Common myeloid progenitor, CD34-positive (primary cell): ENCODE measurements at regions of chr10 and their contacts with region 1.

Region 1: DNA sequence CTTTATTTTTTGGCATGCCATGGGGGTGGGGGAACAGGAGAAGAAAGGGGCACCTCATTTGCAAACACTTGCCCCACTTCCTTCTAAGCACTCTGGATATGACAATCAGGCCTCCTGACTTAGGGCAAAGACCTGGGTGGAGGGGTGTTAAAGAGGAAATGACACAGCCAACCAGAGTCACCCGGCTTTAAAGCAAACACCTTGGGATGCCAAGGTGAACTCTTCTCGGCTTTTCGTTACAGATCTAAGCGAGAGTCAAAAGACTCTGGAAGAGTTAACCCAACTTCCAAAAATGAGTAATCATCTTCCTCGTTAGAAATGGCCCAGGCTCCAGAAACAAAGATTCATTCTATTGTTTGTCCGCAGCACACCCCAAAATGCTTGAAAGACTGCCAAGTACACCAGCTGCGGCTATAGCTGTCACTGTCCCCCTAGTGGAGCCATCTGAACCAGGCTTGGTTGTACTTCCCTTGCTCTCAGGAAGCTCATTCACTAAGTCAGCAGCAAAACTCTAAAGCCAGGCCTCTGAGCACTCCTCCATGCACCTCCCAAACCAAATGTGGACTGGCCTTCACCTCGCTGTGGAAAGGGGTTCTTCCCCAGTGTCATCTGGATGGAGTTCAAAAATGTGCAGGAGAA is 24.8 kb downstream of the FAM53B start:
- DNase-seq: peak; percentile 88 to 95 (median 95)
- H3K4me3 ChIP-seq: peak overlapping the region in 3 of 7 experiments; percentile 23 to 45 (median 41)
- H3K27ac ChIP-seq: peak overlapping the region in 1 of 2 experiments; percentile 49
- H3K4me1 ChIP-seq: peaks cover 42 to 86% (median 65%) of the 10 kb centered on the region in 4 experiments
- H3K27me3 ChIP-seq: no peaks in the 10 kb centered on the region

Region 2: GRCh38 chr10:124647421-124648130 is 71.8 kb before region 1 on chr10:
- CTCF ChIA-PET with region 1: interaction called, 15 read pairs
- POLR2A ChIA-PET with region 1: no interaction called
- DNase-seq: peak; percentile 86 to 92 (median 91)
- H3K4me3 ChIP-seq: peak overlapping the region in 5 of 7 experiments; percentile 16 to 60 (median 40)
- H3K27ac ChIP-seq: peak overlapping the region; percentile 46 to 72
- H3K4me1 ChIP-seq: peaks cover 16 to 87% (median 69%) of the 10 kb centered on the region in 4 experiments
- H3K27me3 ChIP-seq: no peaks in the 10 kb centered on the region

Region 3: GRCh38 chr10:124683814-124684213 is 35.5 kb before region 1 on chr10:
- CTCF ChIA-PET with region 1: interaction called, 11 read pairs
- POLR2A ChIA-PET with region 1: no interaction called
- DNase-seq: peak in 2 of 3 donors; percentile 34 to 35
- H3K4me3 ChIP-seq: peak overlapping the region in 1 of 7 experiments; percentile 40
- H3K27ac ChIP-seq: no peak overlapping the region
- H3K4me1 ChIP-seq: peaks cover 23 to 61% (median 30%) of the 10 kb centered on the region in 4 experiments
- H3K27me3 ChIP-seq: no peaks in the 10 kb centered on the region

Region 4: GRCh38 chr10:124688889-124689670 is 30.3 kb before region 1 on chr10:
- CTCF ChIA-PET with region 1: interaction called, 11 read pairs
- POLR2A ChIA-PET with region 1: no interaction called
- DNase-seq: peak in 1 of 3 donors; percentile 14
- H3K4me3 ChIP-seq: no peak overlapping the region
- H3K27ac ChIP-seq: no peak overlapping the region
- H3K4me1 ChIP-seq: peaks cover 16 to 70% (median 29%) of the 10 kb centered on the region in 4 experiments
- H3K27me3 ChIP-seq: no peaks in the 10 kb centered on the region

Region 5: DNA sequence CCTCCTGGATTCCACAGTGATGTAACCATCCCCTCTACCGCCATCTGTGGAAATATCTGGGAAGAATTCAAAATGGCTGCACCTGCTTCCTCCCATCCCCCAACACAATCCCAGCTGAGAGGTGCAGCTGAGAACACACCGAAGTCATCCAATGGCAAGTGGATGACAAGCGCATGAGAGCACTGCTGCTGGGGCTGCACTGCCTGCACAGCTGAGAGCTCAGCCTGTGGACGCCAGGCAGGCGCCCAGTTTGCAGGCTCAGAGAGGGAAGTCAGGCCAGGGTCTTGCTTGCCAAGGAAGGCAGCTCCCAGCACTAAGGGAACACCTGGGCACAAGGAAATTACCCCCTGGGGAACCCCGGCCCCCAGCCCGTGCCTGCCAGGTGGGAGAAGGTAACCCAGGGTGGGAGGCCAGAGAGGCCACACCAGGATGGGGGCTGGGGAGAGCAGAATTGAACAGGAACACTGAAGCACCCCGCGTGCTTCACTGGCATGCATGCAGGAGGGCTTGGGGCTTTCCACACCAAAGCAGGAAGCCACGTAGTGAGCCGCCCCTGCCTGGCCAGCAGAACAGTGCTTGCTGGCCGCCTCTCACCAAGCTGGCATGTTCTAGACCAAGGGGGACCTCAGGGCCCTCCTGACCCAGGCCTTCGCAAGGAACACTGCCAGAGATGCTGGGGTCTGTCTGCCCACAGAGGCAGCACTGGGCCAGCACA is 21.3 kb before region 1 on chr10:
- CTCF ChIA-PET with region 1: interaction called, 109 read pairs
- POLR2A ChIA-PET with region 1: no interaction called
- DNase-seq: no peak
- H3K4me3 ChIP-seq: no peak overlapping the region
- H3K27ac ChIP-seq: no peak overlapping the region
- H3K4me1 ChIP-seq: peaks cover 2 to 51% (median 25%) of the 10 kb centered on the region in 4 experiments
- H3K27me3 ChIP-seq: no peaks in the 10 kb centered on the region